ENCODE measurements at regions of chr11 and their contacts with region 1.

Region 1: GRCh38 chr11:66846671-66847091 is 3.4 kb downstream of the RCE1 start:
- DNase-seq: peak in 3 of 5 donors; percentile 18 to 34 (median 18)
- H3K4me3 ChIP-seq: no peak overlapping the region
- H3K27ac ChIP-seq: no peak overlapping the region
- H3K4me1 ChIP-seq: peaks cover 14% of the 10 kb centered on the region
- H3K27me3 ChIP-seq: no peaks in the 10 kb centered on the region
- CTCF ChIP-seq: no peak
- EP300 ChIP-seq: no peak
- POLR2A ChIP-seq: no peak

Region 2: GRCh38 chr11:66239998-66240780 is 606.5 kb before region 1 on chr11:
- intact Hi-C with region 1: loop called in 1 of 4 experiments (anchors 5 kb)
- DNase-seq: no peak
- H3K4me3 ChIP-seq: no peak overlapping the region
- H3K27ac ChIP-seq: no peak overlapping the region
- H3K4me1 ChIP-seq: no peaks in the 10 kb centered on the region
- H3K27me3 ChIP-seq: no peaks in the 10 kb centered on the region
- CTCF ChIP-seq: no peak
- EP300 ChIP-seq: no peak
- POLR2A ChIP-seq: no peak

Measured in ovary (tissue), 10 donors.